ENCODE measurements at regions of chr17 and their contacts with region 1.

Region 1: DNA sequence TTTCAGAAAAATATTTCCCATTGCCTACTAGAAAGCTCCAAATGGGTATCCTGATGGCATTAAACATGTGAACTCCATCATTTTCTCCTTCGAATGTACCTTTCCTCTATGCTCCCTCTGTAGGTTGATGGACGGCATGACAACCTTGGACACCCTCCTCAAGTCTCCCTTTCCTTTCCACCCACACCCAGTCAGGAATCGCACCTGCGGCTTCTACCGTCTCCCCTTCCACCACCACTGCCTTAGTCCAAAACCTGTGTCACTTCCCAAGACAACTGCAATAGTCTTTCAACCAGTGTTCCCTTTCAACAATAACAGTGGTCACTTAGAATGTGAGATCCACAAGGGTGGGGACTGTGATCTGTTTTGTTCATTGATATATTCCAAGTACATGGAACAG is 233.1 kb upstream of the AXIN2 start:
- DNase-seq: no peak
- ATAC-seq: no peak
- H3K4me3 Mint-ChIP-seq: no peak overlapping the region
- H3K27ac Mint-ChIP-seq: no peak overlapping the region
- H3K4me1 Mint-ChIP-seq: peaks cover 12% of the 10 kb centered on the region
- H3K27me3 Mint-ChIP-seq: peaks cover 2% of the 10 kb centered on the region

Region 2: GRCh38 chr17:65294179-65294720 is 500.3 kb before region 1 on chr17:
- CTCF ChIA-PET with region 1: interaction called, 4 read pairs
- POLR2A ChIA-PET with region 1: no interaction called
- intact Hi-C with region 1: loop called (anchors 2 to 10 kb)
- DNase-seq: peak; percentile 76
- ATAC-seq: peak; percentile 95
- H3K4me3 Mint-ChIP-seq: no peak overlapping the region
- H3K27ac Mint-ChIP-seq: no peak overlapping the region
- H3K4me1 Mint-ChIP-seq: peaks cover 2% of the 10 kb centered on the region
- H3K27me3 Mint-ChIP-seq: no peaks in the 10 kb centered on the region

Region 3: GRCh38 chr17:65455972-65456343 is 338.6 kb before region 1 on chr17:
- CTCF ChIA-PET with region 1: no interaction called
- POLR2A ChIA-PET with region 1: no interaction called
- intact Hi-C with region 1: loop called in 1 of 2 experiments (anchors 10 kb)
- DNase-seq: peak; percentile 34
- ATAC-seq: peak; percentile 33
- H3K4me3 Mint-ChIP-seq: no peak overlapping the region
- H3K27ac Mint-ChIP-seq: no peak overlapping the region
- H3K4me1 Mint-ChIP-seq: peaks cover 6% of the 10 kb centered on the region
- H3K27me3 Mint-ChIP-seq: no peaks in the 10 kb centered on the region

Region 4: GRCh38 chr17:65561394-65562205 is 233.0 kb before region 1 on chr17 and contains the start of gene AXIN2:
- CTCF ChIA-PET with region 1: no interaction called
- POLR2A ChIA-PET with region 1: no interaction called
- intact Hi-C with region 1: loop called (anchors 2 kb)
- DNase-seq: peak; percentile 92
- ATAC-seq: peak; percentile 82
- H3K4me3 Mint-ChIP-seq: no peak within 1 kb of the TSS
- H3K27ac Mint-ChIP-seq: peak within 1 kb of the TSS; percentile 51
- H3K4me1 Mint-ChIP-seq: peaks cover 28% of the 10 kb centered on the region
- H3K27me3 Mint-ChIP-seq: peaks cover 4% of the 10 kb centered on the region
- total RNA-seq, gene AXIN2: 2.6 to 3.0 TPM

Region 5: DNA sequence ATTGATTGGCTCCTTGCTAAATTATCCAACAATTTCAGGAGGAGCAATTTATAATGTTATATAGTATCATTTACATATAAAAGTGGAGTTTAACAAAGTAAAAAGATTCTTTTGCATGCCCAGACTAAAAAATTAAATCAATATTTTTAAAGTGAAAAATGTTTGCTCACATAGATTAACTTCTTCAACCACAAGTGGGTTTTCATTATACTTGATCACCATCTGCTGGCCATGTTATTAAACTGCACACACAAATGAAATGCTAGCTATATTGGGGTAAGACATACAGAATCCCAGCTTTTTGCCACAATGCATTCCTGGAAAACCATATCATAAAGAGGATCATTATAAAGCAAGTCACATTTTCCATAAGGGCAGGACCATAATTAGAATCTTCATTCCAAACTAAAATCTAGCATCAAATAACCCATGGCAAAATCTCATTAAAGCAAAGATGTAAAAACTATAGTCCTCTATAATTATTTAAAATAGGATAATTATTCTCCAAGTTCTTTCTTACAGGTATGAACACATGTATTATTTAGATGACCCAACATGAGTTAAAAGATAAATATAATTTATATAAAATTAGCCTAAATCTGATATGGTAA is 371.0 kb after region 1 on chr17:
- CTCF ChIA-PET with region 1: no interaction called
- POLR2A ChIA-PET with region 1: no interaction called
- intact Hi-C with region 1: loop called in 1 of 2 experiments (anchors 10 kb)
- DNase-seq: no peak
- ATAC-seq: no peak
- H3K4me3 Mint-ChIP-seq: no peak overlapping the region
- H3K27ac Mint-ChIP-seq: no peak overlapping the region
- H3K4me1 Mint-ChIP-seq: peaks cover 10% of the 10 kb centered on the region
- H3K27me3 Mint-ChIP-seq: no peaks in the 10 kb centered on the region

Measured in activated CD4-positive, alpha-beta T cell treated with anti-CD3 and anti-CD28 coated beads for 36 hours (primary cell).